ENCODE measurements at regions of chr3 and their contacts with region 1.

Region 1: DNA sequence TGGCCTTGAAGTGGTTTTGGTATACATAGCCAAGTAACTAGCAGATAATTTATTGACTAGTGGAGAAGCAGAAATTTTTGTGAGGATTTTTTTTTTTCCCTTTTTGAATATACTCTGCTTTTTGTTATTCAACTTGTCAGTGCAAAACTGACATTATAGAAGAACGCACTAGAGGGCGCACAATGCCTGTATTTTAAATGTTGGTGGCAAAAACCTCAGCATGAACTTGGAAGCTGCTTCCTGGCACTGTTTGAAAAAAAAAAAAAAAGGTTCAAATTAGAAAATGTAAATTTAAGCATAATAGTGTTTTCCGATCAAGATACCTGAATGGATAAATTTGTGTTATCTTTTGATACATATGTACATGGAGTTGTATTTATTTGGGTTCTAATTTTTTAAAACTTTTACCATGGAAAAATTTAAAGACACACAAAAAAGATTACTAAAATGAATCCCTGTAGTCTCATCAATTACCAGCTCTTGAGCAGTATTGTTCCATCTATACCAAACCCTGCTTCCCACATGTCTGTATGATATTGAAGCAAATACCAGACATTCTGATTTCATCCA is 56.0 kb downstream of the SLC25A26 start:
- DNase-seq: peak; percentile 90
- H3K4me3 Mint-ChIP-seq: no peak overlapping the region
- H3K27ac Mint-ChIP-seq: no peak overlapping the region
- H3K4me1 Mint-ChIP-seq: peaks cover 7% of the 10 kb centered on the region
- H3K27me3 Mint-ChIP-seq: no peaks in the 10 kb centered on the region

Region 2: GRCh38 chr3:66355394-66355793 is 78.6 kb after region 1 on chr3:
- intact Hi-C with region 1: loop called (anchors 5 kb)
- DNase-seq: no peak
- H3K4me3 Mint-ChIP-seq: no peak overlapping the region
- H3K27ac Mint-ChIP-seq: no peak overlapping the region
- H3K4me1 Mint-ChIP-seq: peaks cover 12% of the 10 kb centered on the region
- H3K27me3 Mint-ChIP-seq: no peaks in the 10 kb centered on the region

Region 3: GRCh38 chr3:66372681-66373350 is 96.0 kb after region 1 on chr3:
- intact Hi-C with region 1: loop called (anchors 1 kb)
- DNase-seq: peak; percentile 70
- H3K4me3 Mint-ChIP-seq: no peak overlapping the region
- H3K27ac Mint-ChIP-seq: no peak overlapping the region
- H3K4me1 Mint-ChIP-seq: peaks cover 2% of the 10 kb centered on the region
- H3K27me3 Mint-ChIP-seq: no peaks in the 10 kb centered on the region